Left ventricle myocardium inferior (tissue), 1 donor: ENCODE measurements at regions of chr9 and their contacts with region 1.

Region 1: DNA sequence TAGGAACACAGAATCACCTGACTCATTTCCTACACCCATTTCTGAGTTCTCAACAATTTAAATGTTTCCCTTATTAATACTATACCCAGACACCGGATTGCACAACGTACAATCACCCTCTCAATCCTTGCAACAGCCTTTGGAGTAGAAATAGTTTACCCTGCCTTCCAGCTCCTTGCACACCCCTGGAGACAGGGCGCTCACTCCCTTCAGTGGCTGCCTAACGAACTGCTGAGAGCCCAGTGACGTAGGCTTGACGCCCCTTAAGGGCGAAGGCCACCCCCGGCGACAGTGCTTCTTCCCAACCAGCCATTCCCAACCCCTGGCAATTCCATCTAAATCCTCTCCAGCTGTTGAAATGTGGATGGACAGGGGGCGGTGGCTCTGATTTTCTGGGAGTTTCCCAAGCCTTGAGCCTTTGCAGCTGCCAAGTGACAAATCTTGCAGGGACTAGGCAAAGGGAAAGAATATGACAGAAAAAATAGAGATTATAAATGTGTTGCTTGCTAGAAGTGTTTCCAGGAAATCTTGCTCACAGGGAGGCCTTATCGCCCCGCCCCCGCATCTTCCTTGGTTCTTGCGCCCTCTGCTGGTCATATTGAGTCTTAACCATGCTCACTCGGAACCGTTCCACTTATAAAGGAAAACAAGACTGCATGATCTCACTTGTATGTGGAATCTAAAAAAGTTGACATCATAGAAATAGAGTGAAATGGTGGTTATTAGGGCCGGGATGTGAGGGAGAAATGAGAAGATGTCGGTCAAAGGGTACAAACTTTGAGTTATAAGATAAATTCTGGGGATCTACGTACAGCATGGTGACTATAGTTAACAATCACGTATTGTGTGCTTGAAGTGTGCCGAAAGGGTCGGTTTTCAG is 7.6 kb upstream of the BARX1 start:
- DNase-seq: peak; percentile 71
- H3K4me3 ChIP-seq: no peak overlapping the region
- H3K27ac ChIP-seq: no peak overlapping the region
- H3K4me1 ChIP-seq: peaks cover 34% of the 10 kb centered on the region
- H3K27me3 ChIP-seq: peaks cover 93% of the 10 kb centered on the region
- CTCF ChIP-seq: peak; percentile 87

Region 2: GRCh38 chr9:93682232-93682968 is 280.4 kb before region 1 on chr9:
- intact Hi-C with region 1: loop called (anchors 5 kb)
- DNase-seq: peak; percentile 60
- H3K4me3 ChIP-seq: no peak overlapping the region
- H3K27ac ChIP-seq: no peak overlapping the region
- H3K4me1 ChIP-seq: no peaks in the 10 kb centered on the region
- H3K27me3 ChIP-seq: no peaks in the 10 kb centered on the region
- CTCF ChIP-seq: peak; percentile 81

Region 3: GRCh38 chr9:93893899-93894690 is 68.7 kb before region 1 on chr9:
- intact Hi-C with region 1: no loop called
- DNase-seq: no peak
- H3K4me3 ChIP-seq: no peak overlapping the region
- H3K27ac ChIP-seq: no peak overlapping the region
- H3K4me1 ChIP-seq: no peaks in the 10 kb centered on the region
- H3K27me3 ChIP-seq: peaks cover 17% of the 10 kb centered on the region
- CTCF ChIP-seq: no peak